ENCODE measurements at regions of chr1 and their contacts with region 1.

Region 1: DNA sequence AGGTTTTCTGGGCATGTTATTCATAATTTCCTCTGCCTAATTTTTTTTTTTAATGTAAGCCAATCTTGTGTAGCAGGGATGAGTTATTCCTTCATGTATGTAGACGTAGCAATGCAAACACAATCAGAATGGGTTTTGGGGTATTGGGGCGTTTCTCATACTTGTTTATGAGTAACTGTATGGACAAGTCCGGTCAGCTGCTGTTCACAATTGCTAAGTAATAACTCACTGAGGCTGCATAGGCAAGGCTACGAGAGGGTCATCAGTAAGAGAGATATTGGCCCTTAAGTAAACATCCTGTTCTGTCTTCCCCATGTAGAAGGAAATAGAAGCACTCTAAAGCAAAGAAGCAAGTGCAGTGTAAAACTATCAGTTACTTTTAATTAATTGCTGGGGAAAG is 9.5 kb upstream of the TARS2 start:
- DNase-seq: no peak
- ATAC-seq: no peak
- H3K4me3 ChIP-seq: no peak overlapping the region
- H3K4me3 Mint-ChIP-seq: no peak overlapping the region
- H3K27ac ChIP-seq: no peak overlapping the region
- H3K27ac Mint-ChIP-seq: peak overlapping the region; percentile 75
- H3K4me1 ChIP-seq: no peaks in the 10 kb centered on the region
- H3K4me1 Mint-ChIP-seq: peaks cover 11% of the 10 kb centered on the region
- H3K27me3 ChIP-seq: no peaks in the 10 kb centered on the region
- H3K27me3 Mint-ChIP-seq: no peaks in the 10 kb centered on the region
- CTCF ChIP-seq: no peak

Region 2: DNA sequence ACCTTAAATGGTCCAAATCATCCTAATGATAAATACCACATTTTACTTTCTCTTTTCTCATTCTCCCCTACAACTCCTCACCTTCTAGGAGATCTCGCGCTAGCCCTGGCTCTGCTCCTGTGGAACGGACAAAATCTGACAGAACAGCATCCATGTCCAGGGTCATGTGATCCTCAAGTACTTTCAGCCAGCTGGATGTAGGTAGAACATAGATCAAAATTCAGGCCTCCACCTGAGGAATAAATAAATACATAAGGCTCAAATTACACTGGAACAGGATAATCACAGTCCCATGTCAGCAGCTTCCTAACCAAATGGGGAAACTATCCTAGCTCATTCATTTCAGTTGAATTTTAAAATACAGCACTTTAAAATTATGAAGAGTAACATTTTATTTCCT is 500.4 kb before region 1 on chr1:
- CTCF ChIA-PET with region 1: no interaction called
- POLR2A ChIA-PET with region 1: no interaction called
- intact Hi-C with region 1: no loop called
- DNase-seq: no peak
- ATAC-seq: no peak
- H3K4me3 ChIP-seq: no peak overlapping the region
- H3K4me3 Mint-ChIP-seq: no peak overlapping the region
- H3K27ac ChIP-seq: no peak overlapping the region
- H3K27ac Mint-ChIP-seq: no peak overlapping the region
- H3K4me1 ChIP-seq: peaks cover 5% of the 10 kb centered on the region
- H3K4me1 Mint-ChIP-seq: peaks cover 17% of the 10 kb centered on the region
- H3K27me3 ChIP-seq: no peaks in the 10 kb centered on the region
- H3K27me3 Mint-ChIP-seq: no peaks in the 10 kb centered on the region
- CTCF ChIP-seq: no peak

Region 3: GRCh38 chr1:150429805-150430204 is 47.9 kb before region 1 on chr1:
- CTCF ChIA-PET with region 1: no interaction called
- POLR2A ChIA-PET with region 1: no interaction called
- intact Hi-C with region 1: no loop called
- DNase-seq: peak in 2 of 9 experiments; percentile 18 to 41
- ATAC-seq: no peak
- H3K4me3 ChIP-seq: no peak overlapping the region
- H3K4me3 Mint-ChIP-seq: no peak overlapping the region
- H3K27ac ChIP-seq: no peak overlapping the region
- H3K27ac Mint-ChIP-seq: peak overlapping the region; percentile 1
- H3K4me1 ChIP-seq: no peaks in the 10 kb centered on the region
- H3K4me1 Mint-ChIP-seq: peaks cover 22% of the 10 kb centered on the region
- H3K27me3 ChIP-seq: no peaks in the 10 kb centered on the region
- H3K27me3 Mint-ChIP-seq: no peaks in the 10 kb centered on the region
- CTCF ChIP-seq: no peak

Region 4: GRCh38 chr1:150493163-150493562 is 15.4 kb after region 1 on chr1:
- CTCF ChIA-PET with region 1: no interaction called
- POLR2A ChIA-PET with region 1: no interaction called
- intact Hi-C with region 1: loop called in 1 of 2 experiments (anchors 2 kb)
- DNase-seq: no peak
- ATAC-seq: no peak
- H3K4me3 ChIP-seq: no peak overlapping the region
- H3K4me3 Mint-ChIP-seq: no peak overlapping the region
- H3K27ac ChIP-seq: no peak overlapping the region
- H3K27ac Mint-ChIP-seq: no peak overlapping the region
- H3K4me1 ChIP-seq: peaks cover 1% of the 10 kb centered on the region
- H3K4me1 Mint-ChIP-seq: peaks cover 8% of the 10 kb centered on the region
- H3K27me3 ChIP-seq: no peaks in the 10 kb centered on the region
- H3K27me3 Mint-ChIP-seq: no peaks in the 10 kb centered on the region
- CTCF ChIP-seq: no peak

Measured in CD8-positive, alpha-beta T cell (primary cell).